ENCODE measurements at regions of chr7 and their contacts with region 1.

Region 1: GRCh38 chr7:26200444-26201246 is at the start of gene HNRNPA2B1:
- DNase-seq: peak; percentile 95 to 98 (median 96)
- ATAC-seq: peak; percentile 80 to 90 (median 88)
- H3K4me3 ChIP-seq: peak within 1 kb of the TSS; percentile 75 to 97 (median 88)
- H3K27ac ChIP-seq: peak within 1 kb of the TSS; percentile 96 to 100 (median 99)
- H3K4me1 ChIP-seq: peaks cover 10 to 54% (median 47%) of the 10 kb centered on the region in 12 donors
- H3K27me3 ChIP-seq: no peaks in the 10 kb centered on the region
- CTCF ChIP-seq: peak in 1 of 12 donors; percentile 15
- POLR2A ChIP-seq: peak; percentile 97 to 99
- total RNA-seq, gene HNRNPA2B1: 142 to 411 (median 377) TPM

Region 2: GRCh38 chr7:25125137-25125946 is 1075.3 kb before region 1 on chr7 and contains the start of gene CYCS:
- intact Hi-C with region 1: loop called in 1 of 10 experiments (anchors 10 kb)
- DNase-seq: peak; percentile 99 to 100 (median 100)
- ATAC-seq: peak; percentile 95 to 97 (median 97)
- H3K4me3 ChIP-seq: peak within 1 kb of the TSS; percentile 68 to 100 (median 82)
- H3K27ac ChIP-seq: peak within 1 kb of the TSS; percentile 87 to 100 (median 96)
- H3K4me1 ChIP-seq: peaks cover 0 to 24% (median 5%) of the 10 kb centered on the region in 12 donors
- H3K27me3 ChIP-seq: no peaks in the 10 kb centered on the region
- CTCF ChIP-seq: no peak
- POLR2A ChIP-seq: peak; percentile 95 to 99
- total RNA-seq, gene CYCS: 125 to 774 (median 550) TPM

Region 3: DNA sequence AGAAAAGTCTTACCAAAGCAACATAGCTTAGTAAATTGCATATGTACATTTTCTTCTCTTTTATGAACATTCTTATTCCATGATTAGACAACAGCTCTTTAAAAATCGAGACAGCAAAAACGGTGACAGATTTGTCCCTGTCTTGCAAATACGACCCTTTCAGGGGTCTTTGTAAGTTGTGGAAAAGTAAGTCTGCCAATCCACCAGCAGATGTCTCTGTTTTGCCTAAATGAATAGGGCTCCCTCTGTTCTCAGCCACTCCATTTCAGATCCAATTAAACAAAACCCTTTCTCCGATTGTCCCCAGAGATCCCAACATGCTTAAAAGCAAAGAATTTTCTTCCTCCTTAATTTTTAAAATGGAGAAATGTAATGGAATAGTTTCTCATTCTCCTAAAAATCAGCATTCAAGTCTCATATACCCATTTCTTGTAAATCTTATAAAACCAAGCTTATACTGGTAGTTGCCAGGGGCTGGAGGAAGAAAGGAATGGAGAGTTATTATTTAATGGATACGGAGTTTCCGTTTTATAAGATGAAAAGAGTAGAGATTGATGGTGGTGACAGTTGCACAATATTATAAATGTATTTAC is 109.6 kb before region 1 on chr7:
- intact Hi-C with region 1: loop called in 3 of 10 experiments (anchors 5 kb)
- DNase-seq: no peak
- ATAC-seq: peak in 3 of 4 donors; percentile 45 to 64 (median 51)
- H3K4me3 ChIP-seq: peak overlapping the region in 1 of 12 donors; percentile 4
- H3K27ac ChIP-seq: no peak overlapping the region
- H3K4me1 ChIP-seq: peaks cover 0 to 6% (median 0%) of the 10 kb centered on the region in 12 donors
- H3K27me3 ChIP-seq: peaks cover 0 to 6% (median 0%) of the 10 kb centered on the region in 9 donors
- CTCF ChIP-seq: peak; percentile 47 to 75 (median 63)
- POLR2A ChIP-seq: no peak

Region 4: DNA sequence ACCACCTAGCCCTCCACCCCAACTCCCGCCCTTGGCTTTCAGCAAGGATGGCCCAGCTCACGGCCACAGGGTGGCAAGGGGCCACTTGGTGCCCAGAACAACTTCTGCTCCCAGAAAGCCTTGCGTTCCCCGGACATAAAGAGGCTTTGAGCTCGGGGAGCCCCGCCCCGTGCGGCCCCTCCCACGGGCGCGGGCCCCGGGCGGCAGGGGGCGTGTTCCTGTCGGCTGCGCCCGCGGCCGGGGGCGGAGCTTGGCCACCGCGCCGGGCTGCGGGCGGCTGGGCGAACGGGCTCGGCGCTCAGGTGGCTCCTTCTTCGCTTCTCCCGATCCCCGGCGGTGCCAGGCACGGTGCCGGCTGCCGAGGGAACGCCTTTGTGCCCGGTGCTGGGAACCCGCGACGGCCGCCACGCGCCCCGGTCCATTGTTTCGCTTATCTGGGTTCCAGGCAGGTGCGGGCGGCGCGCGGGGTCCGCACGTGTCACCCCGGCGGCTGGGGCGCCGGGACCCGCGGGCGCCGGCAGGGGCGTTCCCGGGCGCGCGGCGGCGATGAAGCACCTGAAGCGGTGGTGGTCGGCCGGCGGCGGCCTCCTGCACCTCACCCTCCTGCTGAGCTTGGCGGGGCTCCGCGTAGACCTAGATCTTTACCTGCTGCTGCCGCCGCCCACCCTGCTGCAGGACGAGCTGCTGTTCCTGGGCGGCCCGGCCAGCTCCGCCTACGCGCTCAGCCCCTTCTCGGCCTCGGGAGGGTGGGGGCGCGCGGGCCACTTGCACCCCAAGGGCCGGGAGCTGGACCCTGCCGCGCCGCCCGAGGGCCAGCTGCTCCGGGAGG is 48.5 kb before region 1 on chr7 and contains the start of gene NFE2L3:
- intact Hi-C with region 1: loop called in 2 of 10 experiments (anchors 2 to 5 kb)
- DNase-seq: peak; percentile 66 to 88 (median 75)
- ATAC-seq: peak in 3 of 4 donors; percentile 84 to 89 (median 87)
- H3K4me3 ChIP-seq: peak within 1 kb of the TSS; percentile 38 to 76 (median 57)
- H3K27ac ChIP-seq: peak within 1 kb of the TSS in 1 of 12 donors; percentile 60
- H3K4me1 ChIP-seq: peaks cover 0 to 43% (median 0%) of the 10 kb centered on the region in 12 donors
- H3K27me3 ChIP-seq: peaks cover 0 to 32% (median 19%) of the 10 kb centered on the region in 9 donors
- CTCF ChIP-seq: peak in 5 of 12 donors; percentile 7 to 35 (median 24)
- POLR2A ChIP-seq: peak in 1 of 2 donors; percentile 25
- total RNA-seq, gene NFE2L3: 0.75 to 5.6 (median 1.8) TPM

Region 5: GRCh38 chr7:26365077-26365900 is 164.6 kb after region 1 on chr7:
- intact Hi-C with region 1: loop called in 3 of 10 experiments (anchors 5 to 10 kb)
- DNase-seq: peak in 2 of 5 donors; percentile 31 to 40
- ATAC-seq: peak; percentile 47 to 87 (median 84)
- H3K4me3 ChIP-seq: no peak overlapping the region
- H3K27ac ChIP-seq: no peak overlapping the region
- H3K4me1 ChIP-seq: peaks cover 0 to 15% (median 0%) of the 10 kb centered on the region in 12 donors
- H3K27me3 ChIP-seq: peaks cover 0 to 44% (median 12%) of the 10 kb centered on the region in 9 donors
- CTCF ChIP-seq: peak; percentile 36 to 84 (median 74)
- POLR2A ChIP-seq: no peak

Region 6: DNA sequence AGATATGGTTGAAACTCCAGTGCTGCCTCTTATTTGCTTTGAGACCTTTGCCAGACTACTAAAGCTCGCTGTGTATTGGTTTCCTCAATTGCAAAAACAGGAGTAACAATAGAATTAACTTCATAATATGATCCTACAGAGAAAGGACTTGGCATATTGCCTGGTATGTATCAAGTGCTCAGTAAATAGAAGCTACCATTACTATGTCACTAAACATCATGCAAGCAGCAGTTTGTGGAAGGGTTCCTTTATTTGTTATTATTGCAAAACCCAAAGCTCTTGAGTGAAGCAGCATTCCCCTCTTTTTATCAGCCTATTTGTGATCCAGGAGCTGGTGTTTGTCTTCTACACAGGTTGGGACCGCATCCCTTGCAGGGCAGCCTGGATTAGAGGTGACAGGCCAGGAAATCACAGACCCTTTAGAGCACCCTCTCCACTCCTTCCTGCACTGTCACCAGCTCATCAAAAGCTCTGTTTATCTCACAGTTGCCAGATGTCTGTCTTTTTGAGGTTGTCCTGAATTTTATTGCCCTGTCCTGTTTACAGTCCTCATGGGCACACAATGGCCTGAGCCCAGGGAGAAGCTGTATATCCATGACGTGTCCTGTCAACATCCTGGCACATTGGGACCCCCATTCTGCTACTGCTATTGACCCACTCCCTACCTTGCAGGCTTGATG is 212.5 kb after region 1 on chr7:
- intact Hi-C with region 1: no loop called
- DNase-seq: no peak
- ATAC-seq: no peak
- H3K4me3 ChIP-seq: no peak overlapping the region
- H3K27ac ChIP-seq: no peak overlapping the region
- H3K4me1 ChIP-seq: no peaks in the 10 kb centered on the region
- H3K27me3 ChIP-seq: peaks cover 0 to 11% (median 0%) of the 10 kb centered on the region in 9 donors
- CTCF ChIP-seq: no peak
- POLR2A ChIP-seq: no peak